Activated CD4-positive, alpha-beta memory T cell treated with anti-CD3 and anti-CD28 coated beads for 36 hours (primary cell): ENCODE measurements at regions of chr15 and their contacts with region 1.

Region 1: DNA sequence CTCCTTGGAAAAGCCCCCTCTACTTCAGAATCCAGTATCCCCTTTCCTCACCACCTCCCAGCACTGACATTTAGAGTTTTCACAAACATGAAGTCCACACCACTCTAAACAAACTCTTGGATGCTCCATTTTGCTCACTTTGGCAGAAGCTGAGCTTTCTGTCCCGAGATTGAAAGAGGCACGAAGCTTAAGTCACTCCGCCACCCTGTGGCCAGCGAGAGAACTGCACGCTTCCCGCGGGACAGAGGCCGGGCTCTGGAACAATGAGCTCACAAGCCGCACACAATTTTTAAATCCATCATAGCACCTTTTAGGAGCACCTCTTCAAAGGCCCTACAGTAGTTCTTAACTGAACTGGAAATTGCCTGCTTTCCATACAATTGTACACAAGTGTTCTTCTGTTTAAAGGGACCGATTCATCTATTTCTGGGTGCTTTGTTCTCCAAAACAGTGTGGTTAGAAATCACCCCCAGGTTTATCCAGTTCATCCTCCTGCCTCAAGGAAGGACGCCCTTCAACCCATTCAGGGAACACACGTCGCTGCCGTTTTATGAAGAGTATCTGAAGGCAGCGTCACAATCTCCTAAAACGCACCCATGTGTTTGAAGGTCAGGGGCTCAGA is 226.1 kb downstream of the VPS13C start:
- DNase-seq: peak; percentile 84
- H3K4me3 Mint-ChIP-seq: no peak overlapping the region
- H3K27ac Mint-ChIP-seq: no peak overlapping the region
- H3K4me1 Mint-ChIP-seq: peaks cover 2% of the 10 kb centered on the region
- H3K27me3 Mint-ChIP-seq: peaks cover 17% of the 10 kb centered on the region

Region 2: GRCh38 chr15:61169904-61170695 is 664.1 kb before region 1 on chr15:
- CTCF ChIA-PET with region 1: interaction called, 41 read pairs
- POLR2A ChIA-PET with region 1: no interaction called
- intact Hi-C with region 1: loop called (anchors 1 kb)
- DNase-seq: peak; percentile 48
- H3K4me3 Mint-ChIP-seq: no peak overlapping the region
- H3K27ac Mint-ChIP-seq: peak overlapping the region; percentile 0
- H3K4me1 Mint-ChIP-seq: peaks cover 18% of the 10 kb centered on the region
- H3K27me3 Mint-ChIP-seq: peaks cover 6% of the 10 kb centered on the region

Region 3: DNA sequence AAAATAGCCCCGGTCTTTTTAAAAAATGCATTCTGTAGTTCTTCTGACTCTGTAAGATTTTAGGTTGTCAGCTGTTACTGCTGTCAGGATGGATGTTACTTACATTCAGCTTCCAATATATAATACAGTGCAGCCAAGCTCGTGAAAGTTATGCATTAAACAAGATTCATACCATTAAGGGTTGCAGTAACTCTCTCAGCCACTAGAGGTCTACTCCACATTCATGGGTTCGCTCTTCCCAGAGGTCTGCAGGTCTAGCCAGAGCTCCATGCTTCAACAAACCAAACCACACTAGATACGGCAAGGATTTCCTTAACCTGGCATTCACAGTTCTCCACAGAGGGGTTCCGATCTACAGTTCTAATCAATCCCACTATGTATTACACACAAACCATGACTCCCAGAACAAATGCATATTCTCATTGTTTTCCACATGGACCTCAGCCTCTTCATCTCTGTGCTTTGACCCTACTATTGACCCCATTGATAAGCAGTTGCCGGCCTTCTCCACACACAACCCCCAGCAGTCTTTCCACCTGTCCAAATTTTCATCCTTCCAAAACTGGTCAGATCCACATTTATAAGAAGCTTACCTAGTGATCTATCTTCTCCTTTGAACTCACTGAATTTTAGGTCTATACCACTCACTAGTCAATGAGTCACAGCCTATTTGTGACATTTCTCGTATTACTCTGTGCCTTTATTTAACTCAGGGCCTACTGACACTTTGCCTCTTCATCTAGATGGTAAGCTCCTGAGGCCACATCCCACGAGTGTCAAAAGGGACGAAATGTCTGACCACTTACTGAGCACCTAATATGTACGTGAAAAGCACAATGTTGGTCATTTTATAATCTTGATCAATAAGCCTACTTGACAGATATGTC is 638.8 kb before region 1 on chr15:
- CTCF ChIA-PET with region 1: interaction called, 18 read pairs
- POLR2A ChIA-PET with region 1: no interaction called
- intact Hi-C with region 1: no loop called
- DNase-seq: no peak
- H3K4me3 Mint-ChIP-seq: no peak overlapping the region
- H3K27ac Mint-ChIP-seq: no peak overlapping the region
- H3K4me1 Mint-ChIP-seq: no peaks in the 10 kb centered on the region
- H3K27me3 Mint-ChIP-seq: peaks cover 6% of the 10 kb centered on the region

Region 4: GRCh38 chr15:61655881-61656280 is 178.3 kb before region 1 on chr15:
- CTCF ChIA-PET with region 1: no interaction called
- POLR2A ChIA-PET with region 1: no interaction called
- intact Hi-C with region 1: no loop called
- DNase-seq: no peak
- H3K4me3 Mint-ChIP-seq: no peak overlapping the region
- H3K27ac Mint-ChIP-seq: no peak overlapping the region
- H3K4me1 Mint-ChIP-seq: no peaks in the 10 kb centered on the region
- H3K27me3 Mint-ChIP-seq: peaks cover 13% of the 10 kb centered on the region

Region 5: GRCh38 chr15:61682891-61683735 is 151.1 kb before region 1 on chr15:
- CTCF ChIA-PET with region 1: no interaction called
- POLR2A ChIA-PET with region 1: no interaction called
- intact Hi-C with region 1: no loop called
- DNase-seq: no peak
- H3K4me3 Mint-ChIP-seq: no peak overlapping the region
- H3K27ac Mint-ChIP-seq: no peak overlapping the region
- H3K4me1 Mint-ChIP-seq: no peaks in the 10 kb centered on the region
- H3K27me3 Mint-ChIP-seq: peaks cover 15% of the 10 kb centered on the region

Region 6: DNA sequence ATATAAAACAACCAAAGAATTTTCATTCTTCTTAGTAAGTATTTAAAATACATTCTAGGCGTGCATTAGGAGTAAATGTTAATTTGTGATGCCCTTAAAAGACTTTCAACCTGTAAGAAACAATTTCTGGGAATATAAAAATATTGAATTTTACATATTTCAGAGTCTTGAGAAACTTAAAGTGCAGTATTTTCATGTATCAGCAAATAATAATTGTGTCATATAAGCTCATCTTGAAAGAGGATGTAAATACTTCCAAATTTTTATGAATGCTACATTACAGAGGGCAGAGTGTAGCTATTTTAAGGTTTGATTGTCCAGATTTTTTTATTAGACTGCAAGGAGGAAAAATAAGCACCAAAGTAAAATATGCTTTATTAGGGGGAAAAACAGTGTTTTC is 19.0 kb after region 1 on chr15:
- CTCF ChIA-PET with region 1: interaction called, 11 read pairs
- POLR2A ChIA-PET with region 1: no interaction called
- intact Hi-C with region 1: no loop called
- DNase-seq: no peak
- H3K4me3 Mint-ChIP-seq: no peak overlapping the region
- H3K27ac Mint-ChIP-seq: no peak overlapping the region
- H3K4me1 Mint-ChIP-seq: peaks cover 3% of the 10 kb centered on the region
- H3K27me3 Mint-ChIP-seq: no peaks in the 10 kb centered on the region

Region 7: GRCh38 chr15:61871926-61872522 is 37.8 kb after region 1 on chr15:
- CTCF ChIA-PET with region 1: interaction called, 10 read pairs
- POLR2A ChIA-PET with region 1: no interaction called
- intact Hi-C with region 1: no loop called
- DNase-seq: no peak
- H3K4me3 Mint-ChIP-seq: no peak overlapping the region
- H3K27ac Mint-ChIP-seq: no peak overlapping the region
- H3K4me1 Mint-ChIP-seq: no peaks in the 10 kb centered on the region
- H3K27me3 Mint-ChIP-seq: no peaks in the 10 kb centered on the region